Activated CD4-positive, alpha-beta memory T cell treated with anti-CD3 and anti-CD28 coated beads, Interleukin-2, amount 10 ng/mL, durations not matched to agents 7 days and 5 days (primary cell): ENCODE measurements at regions of chr15 and their contacts with region 1.

Region 1: DNA sequence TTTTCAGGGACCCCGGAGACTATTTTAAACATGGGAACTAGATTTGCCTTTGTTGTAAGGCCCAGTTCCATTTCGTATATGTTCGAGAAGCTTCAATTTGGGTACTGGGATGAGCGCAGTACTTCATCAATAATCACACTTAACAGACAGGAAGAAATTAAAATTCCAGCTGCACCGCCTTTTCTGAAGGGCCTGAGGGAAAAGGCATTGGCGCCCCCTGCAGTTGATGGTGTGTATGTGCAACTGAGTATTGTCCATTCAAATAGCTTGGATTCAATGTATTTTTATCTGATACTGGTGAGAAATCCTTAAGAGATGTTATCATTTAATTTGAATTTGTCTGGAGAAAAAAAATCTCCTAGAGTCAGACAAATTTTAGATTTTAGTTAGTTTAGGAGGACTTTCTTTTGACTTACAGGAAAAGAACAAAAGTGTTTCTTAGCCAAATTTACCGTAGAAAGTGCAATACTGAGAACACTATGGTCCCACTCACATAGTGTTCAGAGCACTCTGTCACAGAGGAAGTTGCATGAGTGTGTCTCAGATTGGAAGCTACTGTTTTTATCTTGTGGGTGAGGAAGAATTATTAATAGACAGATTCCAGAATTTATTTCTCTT is 5.4 kb upstream of the ALDH1A2 start:
- DNase-seq: peak; percentile 48
- H3K4me3 Mint-ChIP-seq: no peak overlapping the region
- H3K27ac Mint-ChIP-seq: no peak overlapping the region
- H3K4me1 Mint-ChIP-seq: peaks cover 3% of the 10 kb centered on the region
- H3K27me3 Mint-ChIP-seq: peaks cover 27% of the 10 kb centered on the region

Region 2: DNA sequence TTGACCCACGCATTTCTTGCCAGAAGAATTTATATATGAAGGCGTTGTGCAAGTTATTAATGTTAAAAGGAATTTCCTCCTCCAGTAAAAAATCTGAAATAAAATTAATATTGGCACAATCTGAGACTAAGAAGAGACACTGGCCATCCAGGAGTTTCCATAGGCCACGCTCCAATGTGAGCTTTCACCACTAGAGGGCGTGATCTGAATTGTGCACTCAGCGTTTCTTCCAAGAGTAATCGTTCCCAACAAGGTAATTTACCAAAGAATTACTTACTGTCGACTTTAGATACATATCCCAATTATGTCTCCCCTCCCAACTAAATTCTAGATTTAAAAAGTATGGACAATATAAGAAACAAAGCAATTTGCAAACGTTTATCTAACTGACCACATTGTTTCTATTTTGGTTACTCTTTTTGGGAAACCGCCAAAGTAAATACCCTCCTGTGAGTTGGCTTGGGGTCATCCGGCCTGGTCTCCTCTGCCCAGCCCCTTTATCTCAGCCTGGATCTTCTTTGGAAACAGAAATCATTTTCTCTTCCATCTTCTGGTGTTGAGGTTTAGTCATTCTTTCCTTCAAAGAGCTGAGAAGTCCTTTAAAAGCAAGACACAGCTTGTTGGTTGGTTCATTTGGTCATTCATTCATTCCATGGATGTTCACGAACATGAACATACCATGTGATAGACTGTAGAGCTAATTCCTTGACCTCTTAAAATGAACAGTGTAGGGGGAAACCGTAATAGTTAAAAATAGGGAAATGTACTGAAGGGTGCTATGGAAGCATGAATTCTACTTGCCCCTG is 338.2 kb before region 1 on chr15:
- CTCF ChIA-PET with region 1: interaction called, 10 read pairs
- POLR2A ChIA-PET with region 1: no interaction called
- DNase-seq: peak; percentile 42
- H3K4me3 Mint-ChIP-seq: no peak overlapping the region
- H3K27ac Mint-ChIP-seq: no peak overlapping the region
- H3K4me1 Mint-ChIP-seq: no peaks in the 10 kb centered on the region
- H3K27me3 Mint-ChIP-seq: no peaks in the 10 kb centered on the region

Region 3: DNA sequence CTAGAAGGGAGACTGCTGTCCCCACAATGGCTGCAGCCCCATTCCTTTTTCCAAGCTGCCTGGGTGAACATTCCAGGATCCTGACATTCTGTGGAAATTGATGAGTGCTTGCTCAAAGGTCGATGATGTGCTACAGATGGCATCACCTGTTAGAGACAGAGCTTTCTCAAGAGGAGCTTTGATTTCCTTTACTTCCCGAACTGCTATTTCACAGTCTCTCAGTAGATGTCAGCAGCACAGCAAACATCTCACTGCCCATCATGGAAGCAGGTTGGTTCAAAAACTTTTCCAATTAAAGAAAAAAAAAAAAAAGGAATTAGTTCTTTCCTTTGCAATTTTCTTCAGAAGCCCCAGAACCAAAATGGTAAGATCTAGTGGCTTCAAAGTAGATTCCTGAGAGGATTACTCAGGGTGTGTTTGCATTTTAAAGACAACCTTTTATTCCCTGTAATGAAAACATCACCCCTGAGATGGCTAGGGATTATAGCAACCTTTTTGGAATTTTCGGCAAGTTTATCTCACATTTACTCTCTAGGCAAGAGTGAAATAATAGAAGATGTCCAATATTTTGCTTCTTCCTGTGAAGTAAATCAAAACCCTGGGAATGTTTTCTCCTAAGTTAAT is 319.6 kb before region 1 on chr15:
- CTCF ChIA-PET with region 1: interaction called, 16 read pairs
- POLR2A ChIA-PET with region 1: no interaction called
- DNase-seq: no peak
- H3K4me3 Mint-ChIP-seq: no peak overlapping the region
- H3K27ac Mint-ChIP-seq: no peak overlapping the region
- H3K4me1 Mint-ChIP-seq: no peaks in the 10 kb centered on the region
- H3K27me3 Mint-ChIP-seq: peaks cover 3% of the 10 kb centered on the region

Region 4: DNA sequence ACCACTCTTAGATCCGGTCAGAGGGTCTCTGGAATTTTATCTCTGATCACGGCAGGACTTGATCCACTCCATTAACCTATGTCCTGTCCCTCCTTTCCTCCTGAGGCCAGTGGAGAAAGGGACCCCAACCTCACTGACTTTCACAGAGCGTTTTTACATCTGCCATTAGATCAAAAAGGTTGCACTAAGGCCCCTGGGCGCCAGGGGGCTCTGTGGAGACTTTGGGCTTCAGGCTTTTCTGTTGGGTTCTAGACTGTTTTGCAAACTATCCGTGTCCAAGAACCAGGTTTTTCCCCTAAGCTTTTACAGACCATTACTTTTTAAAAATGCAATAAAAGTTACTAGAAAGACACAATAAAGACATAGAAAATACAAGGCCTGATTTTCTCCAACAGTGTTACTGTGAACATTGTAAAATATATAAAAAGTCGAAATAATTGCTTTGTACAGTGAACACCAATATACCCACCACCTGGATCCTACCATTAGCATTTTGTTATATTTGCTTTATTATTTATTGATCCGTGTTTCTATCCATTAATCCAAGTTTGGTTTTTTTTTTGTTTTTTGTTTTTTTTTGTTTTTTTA is 204.7 kb before region 1 on chr15:
- CTCF ChIA-PET with region 1: interaction called, 32 read pairs
- POLR2A ChIA-PET with region 1: no interaction called
- DNase-seq: peak; percentile 56
- H3K4me3 Mint-ChIP-seq: no peak overlapping the region
- H3K27ac Mint-ChIP-seq: no peak overlapping the region
- H3K4me1 Mint-ChIP-seq: peaks cover 4% of the 10 kb centered on the region
- H3K27me3 Mint-ChIP-seq: peaks cover 30% of the 10 kb centered on the region

Region 5: GRCh38 chr15:57903626-57904025 is 167.3 kb before region 1 on chr15:
- CTCF ChIA-PET with region 1: no interaction called
- POLR2A ChIA-PET with region 1: no interaction called
- DNase-seq: no peak
- H3K4me3 Mint-ChIP-seq: no peak overlapping the region
- H3K27ac Mint-ChIP-seq: no peak overlapping the region
- H3K4me1 Mint-ChIP-seq: no peaks in the 10 kb centered on the region
- H3K27me3 Mint-ChIP-seq: peaks cover 5% of the 10 kb centered on the region

Region 6: GRCh38 chr15:58043192-58043903 is 27.6 kb before region 1 on chr15:
- CTCF ChIA-PET with region 1: interaction called, 11 read pairs
- POLR2A ChIA-PET with region 1: no interaction called
- DNase-seq: peak; percentile 24
- H3K4me3 Mint-ChIP-seq: no peak overlapping the region
- H3K27ac Mint-ChIP-seq: no peak overlapping the region
- H3K4me1 Mint-ChIP-seq: no peaks in the 10 kb centered on the region
- H3K27me3 Mint-ChIP-seq: peaks cover 16% of the 10 kb centered on the region

Region 7: DNA sequence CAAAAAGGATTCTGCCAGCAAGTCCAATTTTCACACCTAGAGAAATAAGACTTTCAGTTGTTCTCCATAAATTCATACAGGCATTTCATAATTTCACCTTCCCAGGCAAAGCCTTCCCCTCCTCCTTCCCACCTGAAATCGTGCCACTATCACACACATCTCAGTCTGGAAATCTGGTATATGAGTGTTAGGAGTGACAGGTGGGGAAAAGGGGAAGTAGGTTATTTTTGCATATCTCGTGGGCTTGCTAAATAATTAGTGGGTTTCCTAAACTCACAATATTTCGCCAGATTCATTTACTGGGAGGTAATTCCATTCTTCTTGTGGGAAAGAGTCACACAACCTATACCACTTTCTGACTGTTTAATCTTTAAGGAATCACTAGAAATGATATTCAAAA is 12.8 kb before region 1 on chr15:
- CTCF ChIA-PET with region 1: interaction called, 15 read pairs
- POLR2A ChIA-PET with region 1: no interaction called
- DNase-seq: no peak
- H3K4me3 Mint-ChIP-seq: no peak overlapping the region
- H3K27ac Mint-ChIP-seq: no peak overlapping the region
- H3K4me1 Mint-ChIP-seq: no peaks in the 10 kb centered on the region
- H3K27me3 Mint-ChIP-seq: peaks cover 52% of the 10 kb centered on the region

Region 8: DNA sequence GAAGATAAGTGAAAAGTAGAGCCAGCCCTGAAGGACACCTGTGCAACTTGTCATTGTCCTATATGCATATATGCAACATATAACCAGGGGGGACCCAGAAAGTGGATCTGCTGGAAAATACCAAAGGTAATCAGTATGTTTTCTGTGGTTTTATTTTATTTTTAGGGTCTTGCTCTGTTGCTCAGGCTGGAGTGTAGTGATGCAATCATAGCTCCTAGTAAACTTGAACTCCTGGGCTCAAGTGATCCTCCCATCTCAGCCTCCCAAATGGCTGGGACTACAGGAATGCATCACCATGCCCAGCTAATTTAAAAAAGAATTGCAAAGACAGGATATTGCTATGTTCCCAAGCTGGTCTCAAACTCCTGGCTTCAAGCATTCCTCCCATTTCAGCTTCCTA is 12.6 kb after region 1 on chr15:
- CTCF ChIA-PET with region 1: interaction called, 15 read pairs
- POLR2A ChIA-PET with region 1: no interaction called
- DNase-seq: no peak
- H3K4me3 Mint-ChIP-seq: no peak overlapping the region
- H3K27ac Mint-ChIP-seq: no peak overlapping the region
- H3K4me1 Mint-ChIP-seq: no peaks in the 10 kb centered on the region
- H3K27me3 Mint-ChIP-seq: peaks cover 14% of the 10 kb centered on the region